MCF 10A (cell line): ENCODE measurements at regions of chr15 and their contacts with region 1.

Region 1: GRCh38 chr15:67175643-67176071 is 78.8 kb downstream of the AAGAB start:
- DNase-seq: peak; percentile 93
- H3K4me3 Mint-ChIP-seq: peak overlapping the region; percentile 48
- H3K27ac Mint-ChIP-seq: peak overlapping the region; percentile 80
- H3K4me1 Mint-ChIP-seq: peaks cover 60% of the 10 kb centered on the region
- H3K27me3 Mint-ChIP-seq: no peaks in the 10 kb centered on the region
- CTCF ChIP-seq: no peak

Region 2: GRCh38 chr15:66720206-66721006 is 455.3 kb before region 1 on chr15:
- CTCF ChIA-PET with region 1: no interaction called
- POLR2A ChIA-PET with region 1: no interaction called
- intact Hi-C with region 1: no loop called
- DNase-seq: peak; percentile 62
- H3K4me3 Mint-ChIP-seq: no peak overlapping the region
- H3K27ac Mint-ChIP-seq: no peak overlapping the region
- H3K4me1 Mint-ChIP-seq: peaks cover 14% of the 10 kb centered on the region
- H3K27me3 Mint-ChIP-seq: no peaks in the 10 kb centered on the region
- CTCF ChIP-seq: no peak

Region 3: GRCh38 chr15:66955871-66956585 is 219.6 kb before region 1 on chr15:
- CTCF ChIA-PET with region 1: no interaction called
- POLR2A ChIA-PET with region 1: no interaction called
- intact Hi-C with region 1: loop called (anchors 10 kb)
- DNase-seq: peak; percentile 89
- H3K4me3 Mint-ChIP-seq: no peak overlapping the region
- H3K27ac Mint-ChIP-seq: peak overlapping the region; percentile 30
- H3K4me1 Mint-ChIP-seq: peaks cover 17% of the 10 kb centered on the region
- H3K27me3 Mint-ChIP-seq: no peaks in the 10 kb centered on the region
- CTCF ChIP-seq: no peak

Region 4: DNA sequence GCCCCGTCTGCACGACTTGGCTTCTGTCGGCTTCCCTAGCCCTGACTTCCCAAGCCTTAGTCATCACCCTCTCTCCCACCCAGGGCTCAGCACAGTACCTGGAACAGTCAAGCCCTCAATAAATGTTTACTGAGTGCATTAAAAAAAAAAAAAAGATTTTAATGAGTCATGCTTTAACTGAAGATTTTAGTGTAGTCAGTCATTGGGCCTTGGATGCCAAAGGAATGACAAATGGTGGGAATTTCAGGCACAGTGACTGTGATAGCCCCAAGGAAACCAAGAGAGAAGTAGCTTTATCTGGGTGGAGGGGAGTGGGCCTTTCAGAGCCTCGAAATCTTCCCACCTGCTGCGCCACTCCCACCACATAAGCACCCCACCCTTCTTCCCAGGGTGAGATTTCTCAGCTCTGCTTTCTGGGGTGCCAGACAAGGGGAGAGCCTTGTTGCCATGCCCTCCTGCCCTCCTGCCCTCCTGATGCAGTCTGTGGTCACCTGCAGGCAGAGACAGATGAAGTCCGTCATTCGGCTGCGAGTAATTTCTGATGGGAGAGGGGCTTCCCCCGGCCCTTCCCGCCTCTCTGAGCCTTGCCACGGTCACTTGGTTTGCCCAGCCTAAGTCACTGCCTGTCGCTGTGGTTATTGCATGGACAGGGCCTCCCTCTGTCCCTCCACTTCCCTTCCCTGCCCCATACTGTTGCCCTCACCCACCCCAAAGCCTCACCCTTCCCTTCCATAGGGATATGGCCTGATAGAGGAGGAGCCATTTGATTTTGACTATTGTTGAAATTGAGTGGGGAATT is 68.4 kb before region 1 on chr15:
- CTCF ChIA-PET with region 1: no interaction called
- POLR2A ChIA-PET with region 1: interaction called, 6 read pairs
- intact Hi-C with region 1: loop called (anchors 1 kb)
- DNase-seq: peak; percentile 99
- H3K4me3 Mint-ChIP-seq: peak overlapping the region; percentile 52
- H3K27ac Mint-ChIP-seq: peak overlapping the region; percentile 98
- H3K4me1 Mint-ChIP-seq: peaks cover 40% of the 10 kb centered on the region
- H3K27me3 Mint-ChIP-seq: no peaks in the 10 kb centered on the region
- CTCF ChIP-seq: no peak

Region 5: GRCh38 chr15:67248011-67248505 is 72.4 kb after region 1 on chr15:
- CTCF ChIA-PET with region 1: no interaction called
- POLR2A ChIA-PET with region 1: no interaction called
- intact Hi-C with region 1: no loop called
- DNase-seq: no peak
- H3K4me3 Mint-ChIP-seq: no peak overlapping the region
- H3K27ac Mint-ChIP-seq: no peak overlapping the region
- H3K4me1 Mint-ChIP-seq: peaks cover 15% of the 10 kb centered on the region
- H3K27me3 Mint-ChIP-seq: no peaks in the 10 kb centered on the region
- CTCF ChIP-seq: no peak